Activated CD8-positive, alpha-beta T cell treated with anti-CD3 and anti-CD28 coated beads for 36 hours (primary cell): ENCODE measurements at regions of chr10 and their contacts with region 1.

Region 1: DNA sequence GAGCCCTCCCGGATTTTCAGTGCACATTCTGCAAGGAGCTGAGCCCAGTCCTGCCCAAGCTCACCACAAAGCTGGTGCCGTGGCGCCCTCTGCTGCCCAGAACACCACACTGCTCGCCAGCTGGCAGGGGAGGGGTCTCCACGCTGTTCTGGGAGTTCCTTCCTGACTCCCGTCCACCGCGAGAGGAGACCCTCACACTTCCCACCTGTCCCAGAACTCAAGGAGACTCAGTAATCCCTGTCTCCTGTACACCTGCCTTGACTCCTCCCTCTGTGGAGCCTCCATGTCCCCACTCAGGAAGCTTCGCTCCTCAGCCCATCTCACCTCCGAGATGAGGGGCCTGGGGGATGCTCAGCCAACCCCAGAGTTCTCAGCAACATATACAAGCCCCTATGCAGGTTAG is 11.3 kb downstream of the C10orf105 start:
- DNase-seq: peak; percentile 77
- ATAC-seq: peak; percentile 58
- H3K4me3 Mint-ChIP-seq: no peak overlapping the region
- H3K27ac Mint-ChIP-seq: peak overlapping the region; percentile 20
- H3K4me1 Mint-ChIP-seq: peaks cover 40% of the 10 kb centered on the region
- H3K27me3 Mint-ChIP-seq: no peaks in the 10 kb centered on the region
- CTCF ChIP-seq: peak; percentile 99

Region 2: DNA sequence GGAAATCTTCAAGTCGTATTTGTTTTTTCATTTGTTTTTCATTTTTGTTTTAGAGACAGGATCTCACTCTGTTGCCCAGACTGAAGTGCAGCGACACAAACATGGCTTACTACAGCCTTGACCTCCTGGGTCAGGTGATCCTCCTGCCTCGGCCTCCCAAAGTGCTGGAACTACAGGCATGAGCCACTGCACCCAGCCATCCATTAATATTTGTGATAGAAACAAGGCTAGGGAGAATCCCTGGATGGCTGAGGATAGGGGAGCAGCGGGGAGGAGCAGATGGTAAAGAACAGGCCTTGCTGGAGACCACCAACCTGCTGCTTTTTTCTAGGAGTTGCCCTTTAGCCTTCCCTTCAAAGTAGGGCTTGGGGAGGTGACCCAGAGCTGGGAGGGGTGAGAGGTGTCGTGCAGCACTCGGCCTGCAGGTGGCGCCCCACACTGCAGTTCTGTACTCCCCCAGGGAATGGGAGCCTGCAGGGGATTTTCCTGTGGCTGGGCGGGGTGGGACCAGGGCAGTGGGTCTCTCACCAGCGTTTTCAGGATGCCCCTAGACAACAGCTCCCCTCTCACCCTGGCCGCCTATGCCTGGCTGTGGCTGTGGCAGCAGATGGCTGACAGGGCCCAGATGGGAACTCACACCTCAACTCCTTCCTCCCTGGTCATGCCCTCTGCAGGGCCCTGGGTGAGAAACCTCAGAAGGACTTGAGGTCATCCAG is 324.2 kb before region 1 on chr10:
- CTCF ChIA-PET with region 1: interaction called, 17 read pairs
- POLR2A ChIA-PET with region 1: no interaction called
- intact Hi-C with region 1: loop called (anchors 10 kb)
- DNase-seq: peak; percentile 84
- ATAC-seq: peak; percentile 97
- H3K4me3 Mint-ChIP-seq: no peak overlapping the region
- H3K27ac Mint-ChIP-seq: no peak overlapping the region
- H3K4me1 Mint-ChIP-seq: no peaks in the 10 kb centered on the region
- H3K27me3 Mint-ChIP-seq: peaks cover 2% of the 10 kb centered on the region
- CTCF ChIP-seq: peak; percentile 88

Region 3: GRCh38 chr10:71608819-71609768 is 99.2 kb before region 1 on chr10:
- CTCF ChIA-PET with region 1: interaction called, 18 read pairs
- POLR2A ChIA-PET with region 1: interaction called, 3 read pairs
- intact Hi-C with region 1: no loop called
- DNase-seq: peak; percentile 90
- ATAC-seq: peak; percentile 73
- H3K4me3 Mint-ChIP-seq: no peak overlapping the region
- H3K27ac Mint-ChIP-seq: no peak overlapping the region
- H3K4me1 Mint-ChIP-seq: peaks cover 2% of the 10 kb centered on the region
- H3K27me3 Mint-ChIP-seq: peaks cover 2% of the 10 kb centered on the region
- CTCF ChIP-seq: peak; percentile 66

Region 4: GRCh38 chr10:71719042-71719441 is 10.7 kb after region 1 on chr10:
- CTCF ChIA-PET with region 1: interaction called, 57 read pairs
- POLR2A ChIA-PET with region 1: interaction called, 65 read pairs
- intact Hi-C with region 1: no loop called
- DNase-seq: no peak
- ATAC-seq: no peak
- H3K4me3 Mint-ChIP-seq: no peak overlapping the region
- H3K27ac Mint-ChIP-seq: no peak overlapping the region
- H3K4me1 Mint-ChIP-seq: peaks cover 47% of the 10 kb centered on the region
- H3K27me3 Mint-ChIP-seq: no peaks in the 10 kb centered on the region
- CTCF ChIP-seq: no peak

Region 5: DNA sequence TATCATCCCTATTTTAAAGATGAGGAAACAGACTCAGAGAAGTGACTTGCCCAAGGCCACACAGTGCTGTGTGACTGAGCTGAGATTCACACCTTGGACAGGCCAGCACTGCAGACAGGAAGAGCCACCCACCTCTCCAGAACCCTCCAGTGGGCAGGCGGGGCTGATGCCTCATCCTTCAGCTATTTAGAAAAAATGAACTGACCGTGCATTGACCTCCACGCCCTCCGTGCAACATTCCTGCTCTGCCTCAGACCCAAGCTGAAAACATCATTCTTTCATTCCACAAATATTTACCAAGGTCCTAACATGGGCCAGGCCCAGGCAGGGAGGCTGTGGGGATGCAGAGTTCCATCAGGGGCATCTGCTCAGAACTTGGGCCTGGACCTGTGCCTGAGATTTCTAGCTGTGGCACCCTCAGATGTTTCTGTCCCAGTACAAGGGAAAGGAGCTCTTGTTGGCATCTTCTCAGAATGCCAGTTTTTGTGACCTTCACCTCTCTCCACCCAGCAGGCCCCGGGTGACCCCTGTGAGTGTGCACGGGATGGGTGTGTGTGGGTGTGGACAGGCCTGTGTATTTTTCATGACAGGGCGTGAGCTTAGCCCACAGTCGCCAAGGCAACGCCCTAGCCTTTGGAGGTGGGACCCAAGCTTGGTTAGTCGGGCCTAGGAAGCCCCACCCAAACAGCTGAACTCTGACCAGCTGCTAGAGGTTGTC is 58.6 kb after region 1 on chr10:
- CTCF ChIA-PET with region 1: interaction called, 29 read pairs
- POLR2A ChIA-PET with region 1: interaction called, 15 read pairs
- intact Hi-C with region 1: no loop called
- DNase-seq: peak; percentile 72
- ATAC-seq: peak; percentile 6
- H3K4me3 Mint-ChIP-seq: peak overlapping the region; percentile 32
- H3K27ac Mint-ChIP-seq: peak overlapping the region; percentile 95
- H3K4me1 Mint-ChIP-seq: peaks cover 88% of the 10 kb centered on the region
- H3K27me3 Mint-ChIP-seq: no peaks in the 10 kb centered on the region
- CTCF ChIP-seq: no peak